ENCODE measurements at regions of chr9 and their contacts with region 1.

Region 1: DNA sequence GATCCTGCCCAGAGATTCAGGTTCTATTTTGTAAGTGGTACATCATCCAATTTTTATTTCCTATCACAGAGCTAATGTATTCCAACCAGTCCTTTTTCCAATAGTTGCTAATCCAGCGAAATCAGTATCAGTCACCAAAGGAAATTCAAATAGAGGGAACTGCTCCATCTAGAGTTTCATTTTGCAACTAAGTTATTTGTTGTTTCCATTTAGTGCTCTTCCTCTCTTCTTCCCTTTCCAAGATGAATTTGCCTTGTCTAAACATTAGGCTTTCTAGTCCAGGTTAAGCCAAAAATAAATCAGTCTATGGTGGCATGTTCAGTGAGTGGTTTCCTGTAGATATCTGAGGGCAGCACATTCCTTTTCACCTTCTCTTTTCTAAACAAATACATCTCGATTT is 79.8 kb upstream of the SPATA31D4 start:
- DNase-seq: no peak
- H3K4me3 ChIP-seq: no peak overlapping the region
- H3K27ac ChIP-seq: no peak overlapping the region
- H3K27me3 ChIP-seq: no peaks in the 10 kb centered on the region
- CTCF ChIP-seq: peak; percentile 59

Region 2: GRCh38 chr9:80649001-80649420 is 1199.5 kb before region 1 on chr9:
- CTCF ChIA-PET with region 1: no interaction called
- POLR2A ChIA-PET with region 1: interaction called, 12 read pairs
- DNase-seq: peak; percentile 82
- H3K4me3 ChIP-seq: no peak overlapping the region
- H3K27ac ChIP-seq: peak overlapping the region; percentile 75
- H3K27me3 ChIP-seq: no peaks in the 10 kb centered on the region
- CTCF ChIP-seq: no peak